Colonic mucosa (tissue), 4 donors: ENCODE measurements at regions of chr12 and their contacts with region 1.

Region 1: GRCh38 chr12:107109741-107110719 is 16.7 kb upstream of the CRY1 start:
- DNase-seq: no peak
- H3K4me3 ChIP-seq: no peak overlapping the region
- H3K27ac ChIP-seq: no peak overlapping the region
- H3K4me1 ChIP-seq: no peaks in the 10 kb centered on the region
- H3K27me3 ChIP-seq: no peaks in the 10 kb centered on the region
- CTCF ChIP-seq: no peak

Region 2: DNA sequence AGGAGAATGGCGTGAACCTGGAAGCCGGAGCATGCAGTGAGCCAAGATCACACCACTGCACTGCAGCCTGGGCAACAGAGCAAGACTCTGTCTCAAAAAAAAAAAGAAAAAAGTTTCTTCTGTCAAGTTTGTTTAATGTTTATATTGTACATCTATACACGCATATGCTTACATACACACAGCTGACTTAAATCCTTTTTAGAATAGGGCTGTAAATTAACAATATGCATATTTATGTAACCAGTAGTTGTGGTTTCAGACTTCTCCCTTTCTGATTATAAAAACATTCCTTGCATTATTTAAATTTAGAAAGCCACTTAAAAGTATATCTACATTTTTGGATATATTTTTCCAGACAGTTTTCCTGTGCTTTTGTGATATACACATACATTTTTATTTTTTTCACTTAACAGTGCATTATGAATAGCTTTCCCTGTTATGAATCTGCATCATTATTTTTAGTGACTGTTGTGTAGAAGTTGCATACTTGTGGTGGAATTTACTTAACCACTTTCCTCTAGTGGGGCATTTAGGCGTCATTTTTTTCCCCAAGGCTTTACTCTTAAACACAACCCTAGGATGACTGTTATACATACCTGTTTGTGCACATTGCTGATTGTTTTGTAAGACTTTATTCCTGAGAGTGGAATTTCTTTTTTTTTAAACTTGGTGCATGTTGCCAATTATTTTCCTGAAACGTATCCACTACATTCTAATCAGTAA is 723.1 kb before region 1 on chr12:
- intact Hi-C with region 1: loop called (anchors 10 kb)
- DNase-seq: no peak
- H3K4me3 ChIP-seq: no peak overlapping the region
- H3K27ac ChIP-seq: no peak overlapping the region
- H3K4me1 ChIP-seq: no peaks in the 10 kb centered on the region
- H3K27me3 ChIP-seq: no peaks in the 10 kb centered on the region
- CTCF ChIP-seq: no peak

Region 3: DNA sequence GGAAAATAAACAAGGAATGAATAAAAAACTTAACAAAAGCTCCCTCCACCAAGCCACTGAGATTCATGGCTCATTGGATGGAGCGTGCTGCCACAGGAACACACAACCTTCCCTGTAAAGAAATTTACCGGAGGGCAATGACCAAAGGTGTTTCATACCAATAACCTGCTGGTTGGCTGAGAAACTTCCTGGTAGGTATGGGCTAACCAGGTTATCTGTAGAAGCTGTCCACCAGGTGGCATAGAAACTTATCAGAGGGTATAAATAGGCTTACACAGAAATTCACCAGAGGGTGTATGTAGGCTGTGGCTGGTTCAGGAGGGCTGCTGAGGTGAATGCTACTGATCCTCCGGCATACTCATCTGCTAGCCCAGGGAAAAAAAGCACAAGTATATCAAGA is 96.0 kb before region 1 on chr12:
- intact Hi-C with region 1: loop called (anchors 10 kb)
- DNase-seq: peak; percentile 62
- H3K4me3 ChIP-seq: no peak overlapping the region
- H3K27ac ChIP-seq: no peak overlapping the region
- H3K4me1 ChIP-seq: no peaks in the 10 kb centered on the region
- H3K27me3 ChIP-seq: no peaks in the 10 kb centered on the region
- CTCF ChIP-seq: peak; percentile 22